Activated CD4-positive, alpha-beta memory T cell treated with anti-CD3 and anti-CD28 coated beads for 36 hours (primary cell): ENCODE measurements at regions of chr9 and their contacts with region 1.

Region 1: DNA sequence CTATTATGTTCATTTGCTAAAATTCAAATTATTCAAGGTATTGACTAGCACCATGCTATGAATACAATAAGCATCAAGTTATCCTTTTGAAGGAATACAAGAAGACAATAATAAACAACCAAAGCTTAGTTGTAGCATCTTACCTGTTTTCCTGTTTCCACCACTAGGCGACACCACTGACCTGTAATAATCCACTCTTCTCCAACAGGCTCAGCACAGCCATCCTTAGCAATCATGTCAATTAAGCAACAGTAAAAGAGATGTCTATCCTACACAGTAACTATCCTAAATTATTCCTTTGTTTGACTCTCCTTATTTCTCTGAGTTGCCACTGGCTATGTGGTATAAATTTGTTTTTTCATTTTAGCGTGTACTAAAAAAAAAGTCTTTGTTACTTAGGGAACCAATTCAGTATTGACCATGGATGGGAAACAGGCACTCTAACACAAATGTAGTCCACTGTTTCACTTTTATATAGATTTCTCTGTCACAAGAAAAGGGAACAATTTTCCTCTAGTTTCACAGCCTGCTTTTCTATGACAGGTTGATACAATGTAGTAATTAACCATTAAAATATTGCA is 46.2 kb downstream of the PCA3 start:
- DNase-seq: peak; percentile 29
- H3K4me3 Mint-ChIP-seq: no peak overlapping the region
- H3K27ac Mint-ChIP-seq: no peak overlapping the region
- H3K4me1 Mint-ChIP-seq: no peaks in the 10 kb centered on the region
- H3K27me3 Mint-ChIP-seq: peaks cover 17% of the 10 kb centered on the region

Region 2: GRCh38 chr9:76744336-76744735 is 66.1 kb before region 1 on chr9:
- CTCF ChIA-PET with region 1: no interaction called
- POLR2A ChIA-PET with region 1: no interaction called
- intact Hi-C with region 1: no loop called
- DNase-seq: no peak
- H3K4me3 Mint-ChIP-seq: no peak overlapping the region
- H3K27ac Mint-ChIP-seq: no peak overlapping the region
- H3K4me1 Mint-ChIP-seq: no peaks in the 10 kb centered on the region
- H3K27me3 Mint-ChIP-seq: peaks cover 2% of the 10 kb centered on the region

Region 3: GRCh38 chr9:76987594-76988200 is 177.2 kb after region 1 on chr9:
- CTCF ChIA-PET with region 1: interaction called, 4 read pairs
- POLR2A ChIA-PET with region 1: interaction called, 3 read pairs
- intact Hi-C with region 1: loop called (anchors 2 kb)
- DNase-seq: no peak
- H3K4me3 Mint-ChIP-seq: no peak overlapping the region
- H3K27ac Mint-ChIP-seq: no peak overlapping the region
- H3K4me1 Mint-ChIP-seq: no peaks in the 10 kb centered on the region
- H3K27me3 Mint-ChIP-seq: peaks cover 3% of the 10 kb centered on the region

Region 4: DNA sequence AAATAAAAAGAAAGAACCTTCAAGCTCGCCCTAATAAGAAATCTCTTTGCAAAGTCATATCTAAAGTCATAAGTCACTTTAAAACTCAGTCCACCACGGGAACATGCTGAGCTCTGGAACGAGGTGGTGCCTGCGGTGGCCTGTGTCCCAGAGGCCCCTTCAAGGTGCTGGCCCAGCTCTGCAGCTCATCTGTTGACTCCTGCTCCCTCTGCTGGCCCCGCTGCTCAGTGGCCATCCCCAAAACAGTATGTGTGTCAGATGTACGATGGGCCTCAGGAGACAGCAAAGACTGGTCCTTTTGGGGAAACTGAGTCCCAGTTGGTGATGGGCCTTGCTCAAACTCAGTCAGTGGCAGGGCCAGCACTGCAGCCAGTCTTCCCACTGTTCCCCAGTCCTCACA is 186.2 kb after region 1 on chr9:
- CTCF ChIA-PET with region 1: interaction called, 17 read pairs
- POLR2A ChIA-PET with region 1: no interaction called
- intact Hi-C with region 1: no loop called
- DNase-seq: peak; percentile 33
- H3K4me3 Mint-ChIP-seq: no peak overlapping the region
- H3K27ac Mint-ChIP-seq: no peak overlapping the region
- H3K4me1 Mint-ChIP-seq: no peaks in the 10 kb centered on the region
- H3K27me3 Mint-ChIP-seq: peaks cover 7% of the 10 kb centered on the region

Region 5: DNA sequence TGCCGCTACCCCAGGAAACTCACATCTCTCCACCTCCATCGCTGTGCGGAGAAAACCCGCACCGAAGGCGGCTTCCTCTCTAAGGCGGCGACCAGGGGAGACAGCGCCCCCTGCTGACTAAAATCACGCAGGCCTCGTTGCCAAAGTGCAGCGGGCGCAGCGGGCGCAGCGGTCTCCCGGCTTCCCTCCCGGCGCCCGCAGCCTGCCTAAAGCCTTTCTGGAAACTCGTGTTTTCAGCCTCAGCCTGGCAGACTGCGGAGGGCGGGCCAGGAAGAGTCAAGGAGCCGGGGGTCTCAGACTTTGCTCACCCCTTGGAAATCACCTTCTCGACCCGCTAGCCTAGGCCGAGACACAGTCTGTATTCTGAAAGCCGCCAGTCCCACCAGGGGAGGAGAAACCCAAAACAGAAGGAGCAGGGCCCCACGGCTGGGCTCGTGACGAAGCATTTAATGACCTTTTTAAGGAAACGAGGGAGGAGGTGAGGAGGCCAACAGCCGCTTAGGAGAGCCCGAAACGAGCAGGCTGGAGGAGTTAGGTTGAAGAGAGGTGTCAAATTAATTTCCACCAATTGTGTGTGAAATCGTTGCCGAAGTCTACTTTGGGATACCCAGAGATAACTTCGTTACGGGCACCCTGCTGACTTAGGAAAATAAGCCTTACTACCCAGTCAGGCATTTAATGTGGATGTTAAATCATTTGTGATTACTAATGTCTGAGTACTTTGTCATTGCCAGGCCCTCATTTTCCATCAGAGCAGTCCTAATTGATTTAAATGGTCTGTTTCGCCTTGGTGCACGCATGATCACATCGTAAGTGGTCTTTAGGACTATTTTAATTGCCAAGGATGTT is 201.7 kb after region 1 on chr9:
- CTCF ChIA-PET with region 1: interaction called, 4 read pairs
- POLR2A ChIA-PET with region 1: no interaction called
- intact Hi-C with region 1: loop called (anchors 1 kb)
- DNase-seq: peak; percentile 79
- H3K4me3 Mint-ChIP-seq: peak overlapping the region; percentile 10
- H3K27ac Mint-ChIP-seq: no peak overlapping the region
- H3K4me1 Mint-ChIP-seq: peaks cover 4% of the 10 kb centered on the region
- H3K27me3 Mint-ChIP-seq: peaks cover 61% of the 10 kb centered on the region

Region 6: DNA sequence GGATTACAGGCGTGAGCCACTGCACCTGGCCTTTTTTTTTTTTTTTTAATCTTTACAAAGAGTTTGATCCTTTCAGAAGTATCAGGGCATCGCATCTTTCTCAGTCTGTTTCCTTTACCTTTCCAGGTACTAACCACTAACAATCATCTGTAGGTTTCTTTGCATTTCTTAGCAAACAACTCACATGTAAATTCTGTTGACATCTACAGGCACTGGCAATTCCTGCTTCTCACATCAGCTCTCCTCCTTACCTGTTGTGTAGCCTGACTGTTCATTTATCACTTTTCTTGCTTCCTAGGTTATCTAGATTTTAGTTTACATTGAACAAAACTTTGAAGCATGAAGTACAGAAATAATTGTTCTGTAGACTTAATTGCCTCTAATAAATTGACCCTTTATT is 339.4 kb after region 1 on chr9:
- CTCF ChIA-PET with region 1: interaction called, 10 read pairs
- POLR2A ChIA-PET with region 1: no interaction called
- intact Hi-C with region 1: no loop called
- DNase-seq: no peak
- H3K4me3 Mint-ChIP-seq: no peak overlapping the region
- H3K27ac Mint-ChIP-seq: no peak overlapping the region
- H3K4me1 Mint-ChIP-seq: no peaks in the 10 kb centered on the region
- H3K27me3 Mint-ChIP-seq: peaks cover 14% of the 10 kb centered on the region